ENCODE measurements at regions of chr2 and their contacts with region 1.

Region 1: DNA sequence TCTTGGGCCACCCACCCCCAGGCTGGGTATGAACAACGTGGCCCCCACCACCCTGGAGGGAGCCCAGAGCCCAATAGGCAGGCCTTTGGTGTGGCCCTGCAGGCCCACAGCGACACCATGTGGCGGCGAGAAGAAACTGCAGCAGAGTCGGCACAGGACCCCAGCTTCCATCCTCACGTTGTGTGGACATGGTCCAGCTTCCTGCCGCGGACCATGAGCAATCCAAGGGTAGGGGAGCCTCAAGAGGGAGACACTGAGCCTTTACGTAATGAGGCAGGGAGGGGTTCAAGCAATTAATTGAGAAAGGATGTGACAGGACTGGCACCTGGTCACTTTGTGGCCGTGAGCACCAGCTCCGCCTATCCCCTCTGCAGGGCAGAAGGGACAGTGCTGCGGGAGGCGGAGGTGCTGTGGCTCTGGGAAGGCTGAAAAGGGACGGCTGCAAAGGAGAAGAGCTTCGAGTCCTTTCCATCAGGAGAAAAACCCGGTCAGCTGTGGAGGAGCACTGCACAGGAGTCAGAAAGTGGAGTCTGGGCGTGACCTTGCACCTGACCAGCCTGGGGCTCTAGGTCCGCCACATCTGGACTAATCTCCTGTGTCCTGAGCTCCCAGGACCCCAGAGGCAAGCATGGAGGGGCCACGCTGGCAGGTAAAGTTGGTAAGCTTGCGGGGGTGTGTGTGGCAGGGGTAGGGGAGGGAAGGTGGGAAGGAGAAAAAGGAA is 44.8 kb downstream of the TMEM37 start:
- DNase-seq: peak; percentile 36
- ATAC-seq: peak; percentile 95
- H3K4me3 ChIP-seq: no peak overlapping the region
- H3K27ac ChIP-seq: no peak overlapping the region
- H3K4me1 ChIP-seq: no peaks in the 10 kb centered on the region
- H3K27me3 ChIP-seq: peaks cover 23% of the 10 kb centered on the region
- CTCF ChIP-seq: peak; percentile 78
- POLR2A ChIP-seq: no peak
- RAD21 ChIP-seq: peak; percentile 84

Region 2: GRCh38 chr2:117621326-117621725 is 1855.1 kb before region 1 on chr2:
- CTCF ChIA-PET with region 1: no interaction called
- POLR2A ChIA-PET with region 1: no interaction called
- dilution Hi-C with region 1: no loop called
- in situ Hi-C with region 1: no loop called
- intact Hi-C with region 1: no loop called
- DNase-seq: no peak
- ATAC-seq: no peak
- H3K4me3 ChIP-seq: no peak overlapping the region
- H3K27ac ChIP-seq: no peak overlapping the region
- H3K4me1 ChIP-seq: no peaks in the 10 kb centered on the region
- H3K27me3 ChIP-seq: no peaks in the 10 kb centered on the region
- CTCF ChIP-seq: no peak
- POLR2A ChIP-seq: no peak
- RAD21 ChIP-seq: no peak

Region 3: DNA sequence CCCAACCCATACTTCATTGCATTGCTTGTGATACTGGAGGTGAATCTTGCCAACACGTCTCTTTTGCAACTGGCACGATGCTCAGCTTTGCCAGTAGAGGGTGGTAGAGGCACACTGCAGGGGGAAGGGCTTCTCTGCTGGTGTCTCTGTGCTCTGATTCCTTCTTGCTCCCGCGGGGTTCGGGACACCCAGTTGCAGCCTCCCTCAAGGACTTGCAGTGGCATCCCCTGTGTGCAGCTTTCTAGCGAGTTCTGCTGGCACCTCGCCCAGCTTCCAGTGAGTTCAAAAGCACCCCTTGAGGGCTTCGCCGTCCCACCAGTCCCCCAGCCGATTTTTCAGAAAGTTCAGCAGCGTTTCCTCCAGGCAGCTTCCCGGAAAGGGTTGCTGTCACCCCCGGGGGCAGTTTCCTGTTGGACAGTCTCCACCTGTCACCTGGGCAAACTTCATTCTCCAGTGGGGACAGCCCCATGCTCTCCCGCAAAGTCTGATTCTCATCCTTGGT is 593.7 kb before region 1 on chr2:
- CTCF ChIA-PET with region 1: interaction called, 5 read pairs
- POLR2A ChIA-PET with region 1: no interaction called
- dilution Hi-C with region 1: no loop called
- in situ Hi-C with region 1: no loop called
- intact Hi-C with region 1: loop called (anchors 5 kb)
- DNase-seq: peak; percentile 38
- ATAC-seq: peak; percentile 86
- H3K4me3 ChIP-seq: no peak overlapping the region
- H3K27ac ChIP-seq: no peak overlapping the region
- H3K4me1 ChIP-seq: no peaks in the 10 kb centered on the region
- H3K27me3 ChIP-seq: no peaks in the 10 kb centered on the region; the same call in 1 of the 2 replicates
- CTCF ChIP-seq: peak; percentile 72
- POLR2A ChIP-seq: no peak
- RAD21 ChIP-seq: peak; percentile 64

Region 4: GRCh38 chr2:119011162-119011909 is 465.1 kb before region 1 on chr2:
- CTCF ChIA-PET with region 1: interaction called, 3 read pairs
- POLR2A ChIA-PET with region 1: no interaction called
- dilution Hi-C with region 1: no loop called
- in situ Hi-C with region 1: no loop called
- intact Hi-C with region 1: loop called (anchors 5 kb)
- DNase-seq: peak; percentile 5
- ATAC-seq: peak; percentile 99
- H3K4me3 ChIP-seq: no peak overlapping the region
- H3K27ac ChIP-seq: no peak overlapping the region
- H3K4me1 ChIP-seq: no peaks in the 10 kb centered on the region
- H3K27me3 ChIP-seq: peaks cover 5% of the 10 kb centered on the region
- CTCF ChIP-seq: peak; percentile 67
- POLR2A ChIP-seq: no peak
- RAD21 ChIP-seq: peak; percentile 82

Region 5: DNA sequence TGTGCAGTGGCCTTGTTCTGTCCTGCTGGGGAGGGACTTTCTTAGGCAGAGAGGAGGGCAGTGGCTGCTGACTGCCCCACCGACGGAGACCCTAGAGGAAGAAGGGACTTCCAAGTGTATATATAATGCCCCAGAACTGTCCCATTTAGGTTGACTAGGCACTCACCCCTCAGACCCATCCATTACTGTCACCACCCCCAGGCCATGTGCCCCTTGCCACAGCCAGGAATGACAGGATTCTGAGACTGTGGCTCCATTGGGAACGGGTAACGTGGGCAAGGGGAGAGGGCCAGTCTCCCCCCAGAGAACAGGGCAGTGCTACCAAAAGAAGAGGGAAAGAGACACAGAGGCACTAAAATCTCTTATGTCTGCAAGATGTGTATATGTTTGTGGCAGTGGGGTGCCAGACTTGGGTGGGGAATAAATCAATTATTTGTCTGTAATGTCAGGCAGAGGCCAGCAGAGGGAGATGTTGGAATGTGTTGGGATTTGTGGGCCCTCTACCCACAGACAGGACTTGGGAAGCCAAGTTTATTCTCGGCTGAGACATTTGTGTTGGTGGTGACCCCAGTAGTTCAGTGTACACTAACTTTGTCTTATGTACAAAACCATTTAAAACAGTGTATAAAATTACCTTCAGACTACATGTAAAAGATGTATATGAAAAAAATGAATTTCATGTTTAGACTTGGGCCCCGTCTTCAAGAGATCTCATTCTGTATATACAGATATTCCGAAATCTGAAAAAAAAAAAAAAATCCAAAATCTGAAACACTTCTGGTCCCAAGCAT is 68.8 kb before region 1 on chr2:
- CTCF ChIA-PET with region 1: interaction called, 6 read pairs
- POLR2A ChIA-PET with region 1: no interaction called
- dilution Hi-C with region 1: no loop called
- in situ Hi-C with region 1: no loop called
- intact Hi-C with region 1: loop called (anchors 1 kb)
- DNase-seq: peak; percentile 58
- ATAC-seq: peak; percentile 97
- H3K4me3 ChIP-seq: no peak overlapping the region
- H3K27ac ChIP-seq: no peak overlapping the region
- H3K4me1 ChIP-seq: no peaks in the 10 kb centered on the region
- H3K27me3 ChIP-seq: no peaks in the 10 kb centered on the region; the same call in 1 of the 2 replicates
- CTCF ChIP-seq: peak; percentile 91
- POLR2A ChIP-seq: no peak
- RAD21 ChIP-seq: peak; percentile 85

Measured in IMR-90 (cell line).